Tibial artery (tissue), 4 donors: ENCODE measurements at regions of chr1 and their contacts with region 1.

Region 1: GRCh38 chr1:41366455-41367287 is 5.4 kb downstream of the FOXO6 start:
- DNase-seq: no peak
- H3K4me3 ChIP-seq: peak overlapping the region; percentile 44 to 62
- H3K27ac ChIP-seq: peak overlapping the region; percentile 56 to 65
- H3K4me1 ChIP-seq: peaks cover 0 to 34% (median 25%) of the 10 kb centered on the region in 4 donors
- H3K27me3 ChIP-seq: peaks cover 0 to 13% of the 10 kb centered on the region in 2 donors
- CTCF ChIP-seq: no peak

Region 2: DNA sequence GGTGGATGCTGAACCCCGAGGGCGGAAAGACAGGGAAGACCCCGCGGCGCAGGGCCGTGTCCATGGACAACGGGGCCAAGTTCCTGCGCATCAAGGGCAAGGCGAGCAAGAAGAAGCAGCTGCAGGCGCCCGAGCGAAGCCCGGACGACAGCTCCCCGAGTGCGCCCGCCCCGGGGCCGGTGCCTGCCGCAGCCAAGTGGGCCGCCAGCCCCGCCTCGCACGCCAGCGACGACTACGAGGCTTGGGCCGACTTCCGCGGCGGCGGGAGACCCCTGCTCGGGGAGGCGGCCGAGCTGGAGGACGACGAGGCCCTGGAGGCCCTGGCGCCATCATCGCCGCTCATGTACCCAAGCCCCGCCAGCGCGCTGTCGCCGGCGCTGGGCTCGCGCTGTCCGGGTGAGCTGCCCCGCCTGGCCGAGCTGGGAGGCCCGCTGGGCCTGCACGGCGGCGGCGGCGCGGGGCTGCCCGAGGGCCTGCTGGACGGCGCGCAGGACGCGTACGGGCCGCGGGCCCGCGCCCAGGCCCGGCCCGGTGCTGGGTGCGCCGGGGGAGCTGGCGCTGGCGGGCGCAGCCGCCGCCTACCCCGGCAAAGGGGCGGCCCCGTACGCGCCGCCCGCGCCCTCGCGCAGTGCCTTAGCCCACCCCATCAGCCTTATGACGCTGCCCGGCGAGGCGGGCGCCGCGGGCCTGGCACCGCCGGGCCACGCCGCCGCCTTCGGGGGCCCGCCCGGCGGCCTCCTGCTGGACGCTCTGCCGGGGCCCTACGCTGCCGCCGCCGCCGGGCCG is 15.2 kb after region 1 on chr1:
- intact Hi-C with region 1: loop called (anchors 1 kb)
- DNase-seq: peak; percentile 60 to 82
- H3K4me3 ChIP-seq: peak overlapping the region; percentile 77 to 91
- H3K27ac ChIP-seq: peak overlapping the region; percentile 99
- H3K4me1 ChIP-seq: peaks cover 0 to 51% (median 30%) of the 10 kb centered on the region in 4 donors
- H3K27me3 ChIP-seq: no peaks in the 10 kb centered on the region
- CTCF ChIP-seq: no peak

Region 3: GRCh38 chr1:41516168-41517061 is 149.7 kb after region 1 on chr1:
- intact Hi-C with region 1: no loop called
- DNase-seq: peak; percentile 88 to 95
- H3K4me3 ChIP-seq: peak overlapping the region; percentile 50 to 51
- H3K27ac ChIP-seq: peak overlapping the region; percentile 25 to 69
- H3K4me1 ChIP-seq: peaks cover 6 to 28% (median 18%) of the 10 kb centered on the region in 4 donors
- H3K27me3 ChIP-seq: no peaks in the 10 kb centered on the region
- CTCF ChIP-seq: peak; percentile 91 to 96